GM13976 (cell line): ENCODE measurements at regions of chr1 and their contacts with region 1.

Region 1: DNA sequence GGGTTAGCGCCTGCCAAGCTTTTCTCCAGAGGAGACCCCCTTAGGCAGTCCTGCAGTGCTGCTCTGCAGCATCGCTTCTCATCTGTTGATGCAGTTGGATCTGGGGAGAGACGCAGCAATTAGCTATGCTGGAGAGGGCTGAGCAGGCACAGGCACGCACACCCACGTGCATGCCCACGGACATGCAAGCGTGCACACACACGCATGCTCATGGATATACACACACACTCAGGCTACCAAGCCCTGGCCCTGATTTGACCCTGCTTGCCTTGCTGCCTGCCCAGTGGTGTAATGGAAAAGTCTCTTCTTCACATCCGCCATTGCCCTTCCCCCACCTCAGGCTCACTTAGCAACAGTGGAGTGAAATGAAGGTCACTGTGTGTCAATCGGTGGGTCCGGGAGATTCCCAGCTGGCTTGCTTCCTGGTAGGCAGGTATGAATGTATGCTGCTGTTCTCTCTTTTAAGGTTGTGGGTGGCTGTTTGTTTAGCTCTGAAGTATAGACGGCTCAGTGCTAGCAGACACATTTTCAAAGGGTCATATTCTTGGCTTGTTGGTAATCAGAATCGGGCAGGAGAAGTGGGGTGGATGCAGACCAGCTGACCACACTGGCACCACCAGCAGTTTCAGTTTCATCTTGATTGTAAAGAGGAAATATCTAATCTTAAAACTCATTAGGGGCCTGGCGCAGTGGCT is 9.5 kb downstream of the ATP1B1 start:
- DNase-seq: peak; percentile 49
- CTCF ChIP-seq: no peak

Region 2: DNA sequence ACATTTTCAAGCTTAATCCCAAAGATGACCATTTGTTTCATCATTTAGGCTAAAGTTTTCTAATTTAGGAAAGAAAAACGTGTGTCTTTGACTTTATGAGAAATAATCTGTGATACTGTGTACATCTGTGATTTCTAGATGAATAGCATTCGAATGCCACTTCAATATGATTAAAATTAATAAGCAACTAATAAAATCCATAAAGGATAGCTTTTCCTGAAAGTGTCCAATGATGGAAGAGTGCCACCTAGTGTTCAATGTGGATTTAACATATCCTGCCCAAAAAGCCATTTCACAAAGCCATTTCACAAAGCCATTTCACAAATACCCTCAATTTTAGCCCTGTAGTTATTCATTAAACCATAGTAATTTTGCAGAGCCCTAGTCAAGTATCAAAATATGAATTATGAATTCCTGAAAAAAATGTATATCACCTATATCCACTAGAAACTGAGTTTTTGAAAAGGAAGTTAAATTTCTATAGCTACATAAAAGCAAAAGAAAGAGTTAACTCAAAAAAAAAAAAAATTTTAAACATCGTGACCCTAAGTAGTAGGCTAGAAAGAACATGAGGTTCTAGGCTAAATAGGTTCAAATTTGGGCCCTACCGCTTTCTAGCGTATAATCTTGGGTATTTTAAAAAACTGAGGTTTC is 232.5 kb after region 1 on chr1:
- in situ Hi-C with region 1: loop called (anchors 10 kb)
- DNase-seq: peak; percentile 26
- CTCF ChIP-seq: peak; percentile 69